Ascending aorta (tissue), 2 donors: ENCODE measurements at regions of chr3 and their contacts with region 1.

Region 1: GRCh38 chr3:16247276-16248061 is 17.3 kb downstream of the DPH3 start:
- DNase-seq: peak; percentile 20 to 89
- H3K4me3 ChIP-seq: no peak overlapping the region
- H3K27ac ChIP-seq: no peak overlapping the region
- H3K4me1 ChIP-seq: peaks cover 0 to 14% of the 10 kb centered on the region in 2 donors
- H3K27me3 ChIP-seq: no peaks in the 10 kb centered on the region
- CTCF ChIP-seq: peak; percentile 85 to 93 (median 93)

Region 2: GRCh38 chr3:15629860-15630597 is 617.4 kb before region 1 on chr3:
- intact Hi-C with region 1: loop called (anchors 5 kb)
- DNase-seq: peak in 1 of 2 donors; percentile 78
- H3K4me3 ChIP-seq: peak overlapping the region; percentile 47 to 59
- H3K27ac ChIP-seq: peak overlapping the region in 1 of 2 donors; percentile 10
- H3K4me1 ChIP-seq: peaks cover 9 to 17% of the 10 kb centered on the region in 2 donors
- H3K27me3 ChIP-seq: no peaks in the 10 kb centered on the region
- CTCF ChIP-seq: peak; percentile 72 to 81 (median 78)

Region 3: DNA sequence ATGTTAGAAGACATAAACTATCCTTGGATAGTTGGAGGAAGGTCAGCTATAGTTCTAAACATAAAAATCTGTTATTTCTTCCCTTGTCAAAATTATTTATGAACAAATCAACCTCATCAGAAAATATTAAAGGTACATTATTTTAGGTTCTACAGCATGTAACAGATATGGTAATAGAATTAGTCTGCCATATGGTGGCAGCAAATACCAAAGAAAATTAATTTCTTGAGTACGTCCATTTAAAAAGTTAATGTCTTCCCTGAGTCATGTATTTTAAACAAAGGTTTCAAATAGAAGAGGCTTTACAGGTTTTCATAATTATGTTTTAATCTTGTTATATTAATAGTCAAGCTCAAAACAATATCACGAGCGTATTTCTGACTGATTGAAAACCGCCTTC is 431.8 kb before region 1 on chr3:
- intact Hi-C with region 1: loop called (anchors 5 kb)
- DNase-seq: no peak
- H3K4me3 ChIP-seq: no peak overlapping the region
- H3K27ac ChIP-seq: no peak overlapping the region
- H3K4me1 ChIP-seq: no peaks in the 10 kb centered on the region
- H3K27me3 ChIP-seq: no peaks in the 10 kb centered on the region
- CTCF ChIP-seq: peak; percentile 20 to 49 (median 28)

Region 4: GRCh38 chr3:16048435-16049318 is 198.8 kb before region 1 on chr3:
- intact Hi-C with region 1: loop called (anchors 1 kb)
- DNase-seq: no peak
- H3K4me3 ChIP-seq: peak overlapping the region in 1 of 2 donors; percentile 46
- H3K27ac ChIP-seq: no peak overlapping the region
- H3K4me1 ChIP-seq: peaks cover 0 to 3% of the 10 kb centered on the region in 2 donors
- H3K27me3 ChIP-seq: no peaks in the 10 kb centered on the region
- CTCF ChIP-seq: peak; percentile 72 to 85 (median 82)

Region 5: GRCh38 chr3:17179381-17180210 is 932.1 kb after region 1 on chr3:
- intact Hi-C with region 1: no loop called
- DNase-seq: no peak
- H3K4me3 ChIP-seq: no peak overlapping the region
- H3K27ac ChIP-seq: no peak overlapping the region
- H3K4me1 ChIP-seq: peaks cover 0 to 26% of the 10 kb centered on the region in 2 donors
- H3K27me3 ChIP-seq: no peaks in the 10 kb centered on the region
- CTCF ChIP-seq: no peak